Activated T-helper 1 cell treated with anti-CD3 and anti-CD28 coated beads, Interleukin-12 subunit alpha, Interleukin-12 subunit beta, Interleukin-2, Interleukin-4 antibody, amounts not matched to agents 30 ng/mL and 10 ng/mL and 1 ng/mL, durations not matched to agents 14 hours and 24 hours and 36 hours (primary cell): ENCODE measurements at regions of chr3 and their contacts with region 1.

Region 1: GRCh38 chr3:148943506-148944205 is 47.7 kb upstream of the GYG1 start:
- DNase-seq: peak; percentile 16
- H3K4me3 Mint-ChIP-seq: no peak overlapping the region
- H3K27ac Mint-ChIP-seq: no peak overlapping the region
- H3K4me1 Mint-ChIP-seq: no peaks in the 10 kb centered on the region
- H3K27me3 Mint-ChIP-seq: peaks cover 11% of the 10 kb centered on the region

Region 2: DNA sequence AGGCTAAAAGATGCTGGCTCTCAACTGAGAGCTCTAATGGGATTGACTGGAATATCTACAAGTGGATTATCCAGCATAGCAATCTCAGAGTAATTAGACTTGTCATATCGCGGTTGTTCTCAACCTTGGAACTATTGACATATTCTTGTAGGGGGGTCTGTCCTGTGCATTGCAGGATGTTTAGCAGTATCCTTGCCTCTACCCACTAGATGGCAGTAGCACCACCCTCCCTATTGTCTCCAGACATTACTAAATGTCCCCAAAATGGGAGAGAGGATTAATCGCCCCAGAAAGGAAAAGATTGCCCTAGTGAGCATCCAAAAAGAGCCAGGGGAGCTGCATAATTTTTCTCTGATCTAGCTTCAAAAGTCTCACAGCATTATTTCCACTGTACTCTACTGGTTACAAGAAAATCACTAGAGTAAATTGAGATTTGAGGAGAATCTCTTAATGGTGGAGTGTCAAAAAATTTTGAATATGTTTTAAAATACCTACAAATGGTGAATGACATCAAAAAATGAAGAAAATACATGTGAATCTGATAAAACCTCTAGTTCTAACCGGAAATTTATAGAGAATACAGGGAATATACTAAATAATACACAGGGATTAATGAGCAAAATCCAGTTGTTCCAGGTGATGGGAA is 634.1 kb before region 1 on chr3:
- intact Hi-C with region 1: loop called (anchors 1 kb)
- DNase-seq: no peak
- H3K4me3 Mint-ChIP-seq: no peak overlapping the region
- H3K27ac Mint-ChIP-seq: no peak overlapping the region
- H3K4me1 Mint-ChIP-seq: no peaks in the 10 kb centered on the region
- H3K27me3 Mint-ChIP-seq: peaks cover 3% of the 10 kb centered on the region

Region 3: DNA sequence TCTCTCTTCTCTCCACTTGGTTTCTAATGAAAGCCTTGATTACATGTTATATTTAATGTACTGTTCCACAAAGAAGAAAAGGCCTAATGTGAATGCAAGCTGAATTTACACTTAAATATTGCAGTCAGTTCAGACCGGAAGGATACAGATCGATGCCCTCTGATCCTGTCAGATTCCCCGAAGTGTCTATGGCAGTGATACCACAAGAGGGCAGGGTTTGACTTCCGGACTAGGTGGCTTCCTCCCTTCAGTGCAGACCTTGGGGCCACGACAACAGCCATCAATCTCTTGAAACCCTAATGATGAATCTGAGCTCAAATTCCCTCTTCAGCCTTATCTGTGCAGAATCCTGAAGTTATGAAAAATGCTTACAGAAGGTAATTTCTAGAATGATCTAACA is 216.4 kb before region 1 on chr3:
- intact Hi-C with region 1: loop called (anchors 10 kb)
- DNase-seq: no peak
- H3K4me3 Mint-ChIP-seq: no peak overlapping the region
- H3K27ac Mint-ChIP-seq: no peak overlapping the region
- H3K4me1 Mint-ChIP-seq: no peaks in the 10 kb centered on the region
- H3K27me3 Mint-ChIP-seq: no peaks in the 10 kb centered on the region

Region 4: DNA sequence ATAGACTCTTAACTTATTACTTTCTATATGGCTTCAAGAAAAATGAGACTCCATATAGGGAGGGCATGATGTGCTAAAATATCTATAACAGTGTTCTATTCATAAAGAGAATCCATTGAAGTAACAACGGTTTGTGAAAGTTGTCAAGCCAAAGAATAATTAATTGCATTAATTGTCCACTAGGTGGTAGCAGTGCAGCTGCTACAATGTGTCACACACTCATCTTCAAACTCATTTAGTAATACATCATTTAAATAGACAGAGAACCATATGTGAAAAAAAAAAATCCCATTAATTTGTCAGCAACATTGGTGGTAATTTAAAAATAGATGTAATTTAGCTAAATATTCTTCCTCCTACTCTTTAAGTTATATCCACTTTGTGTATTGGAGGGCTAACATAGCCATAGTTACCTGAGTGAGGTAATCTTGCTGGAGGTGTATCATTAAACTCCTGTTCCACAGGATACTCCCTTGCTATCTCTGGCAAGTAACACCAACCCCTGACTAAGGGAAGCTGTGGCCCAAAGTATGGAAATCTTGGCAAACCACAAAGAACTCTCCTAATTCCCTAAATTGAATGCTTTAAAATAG is 82.3 kb before region 1 on chr3:
- intact Hi-C with region 1: loop called (anchors 1 kb)
- DNase-seq: no peak
- H3K4me3 Mint-ChIP-seq: no peak overlapping the region
- H3K27ac Mint-ChIP-seq: no peak overlapping the region
- H3K4me1 Mint-ChIP-seq: no peaks in the 10 kb centered on the region
- H3K27me3 Mint-ChIP-seq: peaks cover 16% of the 10 kb centered on the region